Gastrocnemius medialis (tissue), 4 donors: ENCODE measurements at regions of chr16 and their contacts with region 1.

Region 1: DNA sequence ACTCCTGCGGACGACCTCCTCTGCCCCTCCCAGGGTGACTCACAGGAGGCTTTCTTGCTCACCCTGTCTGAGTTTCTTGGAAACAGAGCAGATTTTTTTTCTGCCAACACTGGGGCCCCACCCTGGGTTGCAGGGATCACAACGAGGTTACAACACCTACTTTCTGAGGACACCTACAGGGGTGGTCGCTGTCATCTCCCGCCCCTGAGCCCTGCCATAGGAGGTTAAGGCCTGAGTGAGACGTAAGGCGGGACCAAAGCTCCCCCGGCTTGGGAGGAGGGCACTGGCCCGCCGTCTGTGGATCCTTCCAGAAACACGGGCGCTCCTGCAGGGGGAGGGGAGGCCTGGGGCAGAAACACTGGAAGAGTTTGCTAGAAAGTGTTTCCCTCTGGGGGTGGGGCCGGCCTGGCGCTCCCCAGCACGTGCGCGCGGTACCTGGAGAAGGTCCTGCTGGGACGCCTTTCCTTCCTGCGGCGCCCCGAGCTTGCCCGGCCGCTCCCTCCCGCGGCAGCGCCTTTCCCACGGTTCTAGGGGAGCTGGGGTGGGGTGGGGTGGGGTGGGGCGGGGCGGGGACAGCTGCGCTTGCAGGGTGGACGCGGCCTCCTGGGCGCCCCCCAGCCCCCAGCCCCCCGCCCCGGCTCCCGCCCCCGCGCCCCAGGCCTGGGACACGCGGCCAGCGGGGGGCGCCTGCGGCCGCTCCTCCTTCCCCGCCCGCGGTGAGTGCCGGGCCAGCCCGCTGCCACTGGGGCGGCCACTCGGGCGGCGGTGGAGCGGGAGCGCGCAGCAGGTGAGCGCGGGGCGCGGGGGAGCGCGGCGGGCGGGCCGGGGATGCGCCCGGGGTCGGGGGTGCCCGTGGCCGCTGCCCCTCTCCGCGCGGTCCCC is 20.7 kb upstream of the ADCY7 start:
- DNase-seq: peak in 1 of 2 donors; percentile 43
- ATAC-seq: peak; percentile 58 to 60
- H3K4me3 ChIP-seq: peak overlapping the region; percentile 52 to 61 (median 59)
- H3K27ac ChIP-seq: peak overlapping the region in 1 of 4 donors; percentile 7
- H3K4me1 ChIP-seq: peaks cover 0 to 13% of the 10 kb centered on the region in 2 donors
- H3K27me3 ChIP-seq: peaks cover 8 to 18% (median 10%) of the 10 kb centered on the region in 3 donors
- CTCF ChIP-seq: peak in 1 of 5 experiments; percentile 43
- POLR2A ChIP-seq: no peak

Region 2: DNA sequence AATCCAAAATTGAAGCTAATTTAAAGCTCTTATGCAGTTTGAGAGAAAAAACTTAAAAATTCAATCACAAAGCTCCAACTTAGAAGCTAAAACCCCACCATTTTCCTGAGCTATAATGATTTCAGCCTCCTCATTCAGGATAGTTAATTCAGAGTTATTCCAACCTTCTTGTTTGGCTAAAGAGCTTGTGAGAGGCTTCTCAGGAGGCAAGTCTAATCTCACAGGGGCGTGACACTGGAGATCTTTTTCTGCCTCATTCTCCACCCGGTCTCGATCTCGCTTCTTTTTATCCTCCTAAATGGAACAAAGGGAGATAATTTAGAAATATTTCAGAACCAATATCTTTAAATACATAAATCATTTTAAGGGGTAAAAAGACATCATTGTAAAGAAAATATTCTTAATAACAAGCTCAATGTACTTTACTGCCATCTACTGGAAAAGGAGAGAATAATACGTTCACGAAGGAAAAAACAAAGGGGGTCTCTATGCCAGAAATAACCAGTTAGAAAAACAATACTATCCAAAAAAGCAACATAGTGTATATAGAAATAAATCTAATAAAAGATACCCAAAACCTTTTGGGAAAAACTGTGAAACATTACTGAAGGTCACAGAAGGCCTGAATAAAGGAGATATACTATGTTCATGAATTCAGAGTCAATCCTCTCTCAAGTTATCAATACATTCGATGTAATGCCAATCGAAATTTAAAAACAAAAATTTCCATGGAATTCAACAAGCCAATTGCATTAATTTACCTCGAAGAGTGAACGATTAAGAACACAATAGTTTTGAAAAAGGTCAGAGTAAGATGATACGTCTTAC is 109.2 kb after region 1 on chr16:
- in situ Hi-C with region 1: no loop called
- intact Hi-C with region 1: loop called (anchors 5 kb)
- DNase-seq: no peak
- ATAC-seq: no peak
- H3K4me3 ChIP-seq: no peak overlapping the region
- H3K27ac ChIP-seq: no peak overlapping the region
- H3K4me1 ChIP-seq: peaks cover 2 to 3% of the 10 kb centered on the region in 2 donors
- H3K27me3 ChIP-seq: no peaks in the 10 kb centered on the region
- CTCF ChIP-seq: peak in 4 of 5 experiments; percentile 35 to 67 (median 42)
- POLR2A ChIP-seq: no peak